PC-3 (cell line): ENCODE measurements at regions of chr12 and their contacts with region 1.

Region 1: DNA sequence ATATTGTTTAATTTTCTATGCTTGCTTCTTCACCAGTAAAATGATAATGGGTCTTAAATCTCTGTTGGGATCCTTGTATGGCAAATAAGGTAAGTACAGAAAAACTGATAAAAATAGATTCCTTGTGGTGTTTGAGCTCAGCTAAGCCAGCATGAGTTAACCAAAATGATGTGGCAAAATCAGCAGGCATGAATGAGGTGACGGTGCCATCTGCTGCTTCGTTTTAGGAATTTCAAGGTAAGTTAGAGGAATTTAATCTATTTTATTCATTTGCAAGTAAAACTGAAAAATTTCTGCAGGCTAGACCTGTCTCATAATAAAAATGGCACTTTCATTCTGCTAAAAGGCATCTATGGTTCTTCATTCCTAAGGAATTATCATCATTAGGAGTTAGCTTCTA is 10.0 kb upstream of the CLEC7A start:
- DNase-seq: peak; percentile 63
- ATAC-seq: peak; percentile 46
- H3K4me3 ChIP-seq: no peak overlapping the region
- H3K27ac ChIP-seq: no peak overlapping the region
- H3K4me1 ChIP-seq: no peaks in the 10 kb centered on the region
- H3K27me3 ChIP-seq: no peaks in the 10 kb centered on the region
- CTCF ChIP-seq: peak; percentile 71

Region 2: GRCh38 chr12:9940375-9940774 is 199.6 kb before region 1 on chr12:
- CTCF ChIA-PET with region 1: no interaction called
- POLR2A ChIA-PET with region 1: no interaction called
- intact Hi-C with region 1: loop called (anchors 5 kb)
- DNase-seq: peak; percentile 35
- ATAC-seq: no peak
- H3K4me3 ChIP-seq: no peak overlapping the region
- H3K27ac ChIP-seq: no peak overlapping the region
- H3K4me1 ChIP-seq: no peaks in the 10 kb centered on the region
- H3K27me3 ChIP-seq: peaks cover 19% of the 10 kb centered on the region
- CTCF ChIP-seq: peak; percentile 71